GM12878 (cell line): ENCODE measurements at regions of chr6 and their contacts with region 1.

Region 1: DNA sequence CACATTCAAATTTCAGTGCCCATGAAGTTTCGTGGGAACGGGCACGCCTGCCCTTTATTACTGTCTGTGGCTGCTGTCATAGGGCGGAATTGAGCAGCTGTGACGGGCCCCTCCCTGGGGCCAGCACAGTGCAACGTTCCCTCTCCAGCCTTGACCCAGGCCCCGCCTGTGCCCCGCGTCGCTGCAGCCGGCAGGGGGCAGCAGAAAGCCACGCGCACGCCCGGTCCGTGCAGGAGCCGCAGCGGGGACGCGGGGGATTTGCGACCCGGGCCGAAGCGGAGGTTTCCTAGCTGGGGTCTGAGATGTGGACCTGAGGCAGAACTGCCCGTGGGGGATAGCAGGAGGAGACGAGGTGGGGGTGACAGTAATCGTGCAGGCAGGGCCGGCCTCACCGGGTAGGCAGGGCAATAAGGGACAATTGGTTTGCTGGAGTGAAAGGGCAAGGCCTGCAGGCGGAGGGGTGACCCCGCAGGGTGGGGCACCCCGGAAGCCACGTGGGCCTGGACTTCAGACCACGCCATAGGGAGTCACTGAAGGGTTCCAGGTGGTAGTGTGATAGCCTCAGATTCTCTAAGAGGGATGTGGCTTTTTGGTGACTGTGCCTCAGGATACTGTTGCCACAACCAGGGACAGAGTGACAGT is 54.4 kb downstream of the SYTL3 start:
- DNase-seq: no peak
- ATAC-seq: peak; percentile 99
- H3K4me3 ChIP-seq: peak overlapping the region; percentile 45; the same call in 1 of the 2 replicates
- H3K27ac ChIP-seq: no peak overlapping the region
- H3K4me1 ChIP-seq: peaks cover 9% of the 10 kb centered on the region
- H3K27me3 ChIP-seq: no peaks in the 10 kb centered on the region
- CTCF ChIP-seq: peak; percentile 97 to 99 (median 98); a peak in 5 of 6 replicates
- EP300 ChIP-seq: no peak
- POLR2A ChIP-seq: no peak
- RAD21 ChIP-seq: peak; percentile 97

Region 2: DNA sequence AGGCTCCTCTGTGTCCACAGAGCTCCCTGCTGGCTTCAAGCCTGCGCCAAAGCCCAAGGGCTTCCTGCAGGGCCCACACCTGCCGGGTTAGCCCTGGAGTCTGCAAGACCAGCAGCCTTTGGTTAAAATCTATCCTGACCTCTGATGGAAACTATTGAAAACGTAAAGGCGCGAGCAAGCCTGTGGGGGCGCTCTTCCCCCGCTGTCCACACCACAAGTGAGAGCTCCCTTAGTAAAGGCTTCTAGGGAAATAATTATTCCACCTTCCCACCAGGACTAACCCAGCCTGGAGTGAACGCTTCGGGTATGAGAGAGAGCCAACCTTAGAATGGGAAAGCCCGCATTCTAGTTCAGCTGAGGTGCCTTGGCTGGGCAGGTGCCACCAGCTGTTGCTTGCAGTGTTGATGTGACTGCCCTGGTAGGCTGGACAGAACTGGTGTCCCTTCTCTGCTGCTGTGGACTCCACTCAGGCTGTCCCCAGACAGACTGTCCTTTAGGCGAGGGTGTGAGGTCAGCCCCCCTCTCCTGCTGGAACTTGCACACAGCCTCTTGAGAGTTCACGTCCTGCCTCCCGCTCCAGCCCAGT is 14.3 kb after region 1 on chr6:
- CTCF ChIA-PET with region 1: interaction called, 21 read pairs
- POLR2A ChIA-PET with region 1: no interaction called
- RAD21 ChIA-PET with region 1: interaction called, 12 read pairs
- SMC1A ChIA-PET with region 1: interaction called, 13 read pairs
- in situ Hi-C with region 1: no loop called
- intact Hi-C with region 1: no loop called
- DNase-seq: no peak
- ATAC-seq: no peak
- H3K4me3 ChIP-seq: no peak overlapping the region
- H3K27ac ChIP-seq: 0 out of 2 replicates have a peak overlapping the region, but pooled peaks have one; percentile 79
- H3K4me1 ChIP-seq: peaks cover 50% of the 10 kb centered on the region
- H3K27me3 ChIP-seq: no peaks in the 10 kb centered on the region
- CTCF ChIP-seq: peak in 2 of 3 experiments; percentile 29 to 61; a peak in 4 of 6 replicates
- EP300 ChIP-seq: no peak
- POLR2A ChIP-seq: no peak
- RAD21 ChIP-seq: peak; percentile 57

Region 3: DNA sequence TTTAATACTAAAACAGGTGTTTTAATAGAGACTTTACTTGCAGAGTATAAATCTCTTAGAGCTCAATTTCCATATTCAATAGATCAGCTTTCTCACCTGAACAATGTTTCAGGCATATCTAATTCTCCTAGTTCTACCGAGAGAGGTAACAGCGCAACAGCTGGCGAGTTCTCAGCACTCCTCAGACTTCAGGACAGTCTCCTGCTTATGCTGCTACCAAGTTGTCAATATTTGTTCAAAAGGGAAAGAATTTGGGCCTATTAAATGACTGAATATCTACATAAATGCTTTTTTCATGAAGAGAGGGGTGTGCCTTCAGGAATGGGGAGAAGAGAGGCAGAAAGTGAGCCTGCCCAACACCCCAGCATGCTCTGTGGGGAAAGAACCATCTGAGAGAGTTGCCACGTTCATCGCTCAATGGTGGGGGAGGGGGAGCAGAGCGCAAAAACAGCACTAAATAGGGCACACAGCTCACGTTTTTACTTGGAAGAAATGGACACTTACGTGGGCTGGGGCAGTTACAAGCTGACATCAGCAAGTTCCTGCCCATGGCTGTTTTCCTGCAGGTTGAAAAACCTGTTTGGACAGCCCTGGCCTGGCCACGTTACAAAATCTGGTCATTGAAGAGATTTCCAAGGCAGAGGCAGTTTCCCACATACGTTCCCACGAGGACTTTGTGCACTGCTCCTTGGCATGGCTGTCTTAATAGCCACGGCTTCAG is 76.8 kb after region 1 on chr6:
- CTCF ChIA-PET with region 1: no interaction called
- POLR2A ChIA-PET with region 1: no interaction called
- RAD21 ChIA-PET with region 1: no interaction called
- SMC1A ChIA-PET with region 1: no interaction called
- in situ Hi-C with region 1: loop called (anchors 5 kb)
- intact Hi-C with region 1: loop called (anchors 5 kb)
- DNase-seq: no peak
- ATAC-seq: no peak
- H3K4me3 ChIP-seq: no peak overlapping the region
- H3K27ac ChIP-seq: no peak overlapping the region
- H3K4me1 ChIP-seq: no peaks in the 10 kb centered on the region
- H3K27me3 ChIP-seq: no peaks in the 10 kb centered on the region
- CTCF ChIP-seq: no peak
- EP300 ChIP-seq: no peak
- POLR2A ChIP-seq: peak; percentile 25
- RAD21 ChIP-seq: no peak